Esophagus squamous epithelium (tissue), 5 donors: ENCODE measurements at regions of chr12 and their contacts with region 1.

Region 1: DNA sequence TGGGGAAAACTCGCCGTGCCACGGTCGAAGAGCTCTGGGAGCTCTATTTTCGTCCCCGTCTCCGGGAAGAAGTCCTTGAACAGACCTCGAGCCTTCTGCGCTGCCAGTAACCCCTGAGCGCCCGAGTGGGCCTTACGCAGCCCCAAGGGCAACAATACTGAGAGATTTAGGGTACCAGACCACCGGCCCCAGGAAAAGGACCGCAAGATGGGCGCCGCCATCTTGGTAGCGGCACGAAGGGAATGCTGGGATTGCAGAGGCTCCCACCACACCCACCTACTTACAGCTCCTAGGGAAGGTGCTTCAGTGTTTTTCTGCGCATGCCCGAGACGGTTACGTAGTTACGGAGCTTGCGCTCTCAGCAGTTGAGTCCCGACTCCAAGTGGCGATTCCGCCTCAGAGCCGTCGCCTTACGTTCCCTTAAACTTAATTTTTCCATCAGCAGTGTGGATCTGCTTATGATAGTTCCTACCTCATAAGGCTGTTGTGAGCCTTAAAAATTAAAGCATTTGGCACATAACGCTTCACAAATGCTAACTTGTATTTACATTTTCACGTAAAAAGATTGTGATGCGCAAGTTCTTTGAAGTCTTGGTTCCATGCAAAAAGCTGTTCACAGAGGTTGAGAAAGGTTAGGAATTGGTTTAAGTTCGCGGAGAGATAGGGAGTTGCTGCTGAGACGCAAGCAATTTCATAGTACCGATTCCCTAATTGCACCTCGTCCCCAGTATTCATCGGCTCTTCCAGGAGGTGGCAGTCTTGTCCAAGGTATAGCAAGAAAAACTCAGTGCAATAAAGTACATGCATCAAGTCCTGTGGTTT is at the start of gene YARS2:
- DNase-seq: peak; percentile 55
- H3K4me3 ChIP-seq: peak within 1 kb of the TSS; percentile 67 to 91 (median 72)
- H3K27ac ChIP-seq: peak within 1 kb of the TSS; percentile 83 to 94 (median 94)
- H3K4me1 ChIP-seq: peaks cover 6 to 20% (median 12%) of the 10 kb centered on the region in 3 donors
- H3K27me3 ChIP-seq: no peaks in the 10 kb centered on the region
- CTCF ChIP-seq: peak; percentile 71 to 90 (median 82)
- POLR2A ChIP-seq: peak in 2 of 4 donors; percentile 57 to 71
- total RNA-seq, gene YARS2: 17.0 to 26.3 (median 22.8) TPM

Region 2: DNA sequence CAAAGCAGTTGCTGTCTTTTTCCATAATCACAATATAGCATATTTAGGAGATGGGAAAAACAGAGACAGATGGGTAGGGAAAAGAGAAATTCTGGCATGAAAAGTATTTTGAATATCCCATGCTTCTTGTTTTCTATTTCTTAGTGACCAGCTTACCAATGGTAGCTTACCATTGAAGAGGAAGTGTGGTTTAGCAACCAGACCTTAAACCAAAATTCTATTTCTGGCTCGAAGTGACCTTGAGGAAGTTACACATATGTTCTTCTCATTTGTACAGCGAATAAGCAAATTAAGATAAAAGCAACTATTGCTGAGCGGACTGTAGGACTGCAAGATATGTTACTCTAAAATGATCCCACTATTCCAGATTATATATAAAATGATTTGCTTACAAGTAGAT is 273.6 kb before region 1 on chr12:
- intact Hi-C with region 1: no loop called
- DNase-seq: no peak
- H3K4me3 ChIP-seq: no peak overlapping the region
- H3K27ac ChIP-seq: peak overlapping the region in 1 of 4 donors; percentile 12
- H3K4me1 ChIP-seq: peaks cover 0 to 11% (median 0%) of the 10 kb centered on the region in 3 donors
- H3K27me3 ChIP-seq: no peaks in the 10 kb centered on the region
- CTCF ChIP-seq: no peak
- POLR2A ChIP-seq: no peak

Region 3: GRCh38 chr12:34022079-34022830 is 1266.4 kb after region 1 on chr12 and contains the start of gene ALG10:
- intact Hi-C with region 1: loop called (anchors 10 kb)
- DNase-seq: peak; percentile 84
- H3K4me3 ChIP-seq: peak within 1 kb of the TSS; percentile 57 to 85 (median 62)
- H3K27ac ChIP-seq: peak within 1 kb of the TSS; percentile 74 to 91 (median 84)
- H3K4me1 ChIP-seq: peaks cover 0 to 24% (median 8%) of the 10 kb centered on the region in 3 donors
- H3K27me3 ChIP-seq: no peaks in the 10 kb centered on the region
- CTCF ChIP-seq: peak; percentile 60 to 76 (median 72)
- POLR2A ChIP-seq: no peak
- total RNA-seq, gene ALG10: 1.3 to 6.9 (median 4.8) TPM